RWPE1 (cell line): ENCODE measurements at regions of chr7 and their contacts with region 1.

Region 1: GRCh38 chr7:107396990-107397389 is 72.9 kb upstream of the GPR22 start:
- DNase-seq: no peak
- H3K27ac ChIP-seq: no peak overlapping the region
- CTCF ChIP-seq: no peak

Region 2: GRCh38 chr7:107253599-107253998 is 143.4 kb before region 1 on chr7:
- CTCF ChIA-PET with region 1: interaction called, 10 read pairs
- POLR2A ChIA-PET with region 1: no interaction called
- DNase-seq: no peak
- H3K27ac ChIP-seq: no peak overlapping the region
- CTCF ChIP-seq: no peak

Region 3: DNA sequence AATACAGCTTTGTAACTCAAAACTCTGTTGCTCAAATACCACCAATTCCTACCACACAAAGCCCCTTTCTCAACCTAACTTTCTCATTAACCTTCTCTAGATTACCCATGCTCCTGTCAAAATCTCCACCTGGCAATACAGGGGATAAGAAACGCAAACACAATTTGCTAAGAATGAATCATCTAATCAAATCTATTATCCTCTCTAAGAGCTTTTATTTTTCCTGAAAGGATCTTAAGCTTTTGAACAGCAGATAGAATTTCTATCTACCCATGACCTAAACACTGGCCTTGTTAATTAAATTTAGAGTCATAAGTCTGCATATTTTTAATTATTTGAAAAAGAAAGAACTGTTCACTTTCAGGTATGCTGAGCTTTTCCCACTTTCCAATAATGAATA is 129.9 kb before region 1 on chr7:
- CTCF ChIA-PET with region 1: no interaction called
- POLR2A ChIA-PET with region 1: no interaction called
- DNase-seq: no peak
- H3K27ac ChIP-seq: no peak overlapping the region
- CTCF ChIP-seq: no peak

Region 4: GRCh38 chr7:107408349-107408748 is 11.4 kb after region 1 on chr7:
- CTCF ChIA-PET with region 1: no interaction called
- POLR2A ChIA-PET with region 1: no interaction called
- DNase-seq: no peak
- H3K27ac ChIP-seq: no peak overlapping the region
- CTCF ChIP-seq: no peak